Left cardiac atrium (tissue), 4 donors: ENCODE measurements at regions of chr4 and their contacts with region 1.

Region 1: DNA sequence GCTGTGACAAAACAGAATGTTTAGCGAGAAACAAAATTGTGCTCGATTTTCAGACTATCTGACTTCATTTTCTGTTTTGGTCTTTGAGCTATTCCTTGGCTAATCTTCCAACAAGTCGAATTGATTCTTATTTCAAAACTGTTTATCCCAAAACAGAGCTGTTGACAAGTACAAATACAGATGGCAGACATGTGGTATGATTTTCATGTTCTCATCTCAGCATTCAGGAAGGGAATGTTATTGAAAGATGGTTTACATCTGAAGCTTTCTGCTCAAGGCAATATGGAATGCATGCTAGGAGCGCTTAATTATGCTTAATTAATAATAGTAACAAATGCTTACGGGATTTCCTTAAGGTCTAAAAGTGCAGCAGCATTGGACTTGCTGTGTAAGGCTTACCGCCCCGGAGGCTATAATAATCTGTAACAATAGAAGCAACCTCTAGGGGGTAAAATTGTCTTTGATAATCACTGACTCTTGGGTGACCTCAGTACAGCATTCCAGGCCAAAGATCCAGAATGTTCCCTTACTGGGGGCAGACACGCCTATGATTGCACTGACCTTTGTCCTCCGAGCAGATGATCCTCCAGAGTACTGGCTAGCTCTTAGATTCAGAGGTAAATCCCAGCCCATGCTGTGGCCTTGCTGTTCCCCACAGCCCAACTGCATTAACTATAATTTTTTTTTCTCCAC is 16.4 kb downstream of the LSM6 start:
- DNase-seq: no peak
- ATAC-seq: peak; percentile 75 to 79

Region 2: DNA sequence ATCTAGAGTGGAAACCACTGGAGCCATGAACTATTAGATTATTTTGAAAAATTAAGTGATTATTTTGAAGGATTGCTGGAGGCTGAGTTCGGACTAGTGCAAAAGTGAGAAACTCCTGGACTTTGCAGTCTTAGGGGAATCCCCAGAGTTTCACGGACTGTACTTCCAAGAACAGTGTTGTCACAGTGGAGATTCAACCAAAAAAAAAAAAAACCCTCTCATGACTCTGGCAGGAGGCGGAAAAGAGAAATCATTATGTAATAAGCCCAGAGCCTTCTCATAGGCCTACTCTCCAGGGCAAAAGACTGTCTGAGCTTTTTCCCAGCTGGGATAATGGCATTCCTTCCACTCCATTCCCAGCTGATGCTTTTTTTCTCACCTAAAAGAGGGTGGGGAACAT is 528.7 kb before region 1 on chr4:
- intact Hi-C with region 1: no loop called
- DNase-seq: no peak
- ATAC-seq: peak; percentile 54 to 97

Region 3: DNA sequence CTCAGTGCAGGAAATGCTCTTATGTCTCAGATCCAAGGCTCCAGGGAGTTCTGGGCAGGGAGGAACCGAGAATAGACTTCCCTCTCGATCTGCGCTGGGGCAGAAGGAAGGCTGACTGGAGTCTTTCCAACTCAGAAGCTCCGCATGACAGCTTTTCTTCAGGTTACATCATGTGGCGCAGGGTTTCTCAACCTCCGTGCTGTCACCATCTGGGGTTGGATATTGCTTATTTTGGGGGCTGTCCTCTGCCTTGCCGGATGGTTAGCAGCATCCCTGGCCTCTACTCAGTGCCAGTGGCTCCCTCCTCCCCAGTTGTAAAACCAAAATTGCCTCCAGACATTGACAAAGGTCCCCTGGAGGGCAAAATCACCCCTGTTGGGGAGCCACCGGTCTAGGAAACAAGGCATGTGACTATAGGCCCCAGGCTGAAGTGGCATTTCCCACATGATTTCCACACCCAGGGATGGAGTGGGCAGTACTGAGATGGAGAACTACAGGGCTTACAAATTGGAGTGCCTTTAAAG is 43.8 kb after region 1 on chr4:
- intact Hi-C with region 1: loop called in 1 of 2 experiments (anchors 5 kb)
- DNase-seq: no peak
- ATAC-seq: peak; percentile 27 to 72

Region 4: GRCh38 chr4:146302822-146303221 is 110.9 kb after region 1 on chr4:
- intact Hi-C with region 1: no loop called
- DNase-seq: no peak
- ATAC-seq: no peak